ENCODE measurements at regions of chr20 and their contacts with region 1.

Region 1: GRCh38 chr20:10660661-10661060 is 13.1 kb downstream of the JAG1 start:
- DNase-seq: no peak
- H3K4me3 ChIP-seq: no peak overlapping the region
- H3K4me3 Mint-ChIP-seq: peak overlapping the region; percentile 55
- H3K27ac Mint-ChIP-seq: peak overlapping the region; percentile 90
- H3K4me1 ChIP-seq: peaks cover 68% of the 10 kb centered on the region
- H3K4me1 Mint-ChIP-seq: peaks cover 80% of the 10 kb centered on the region
- H3K27me3 ChIP-seq: no peaks in the 10 kb centered on the region
- H3K27me3 Mint-ChIP-seq: no peaks in the 10 kb centered on the region
- CTCF ChIP-seq: no peak

Region 2: GRCh38 chr20:10611357-10611756 is 49.3 kb before region 1 on chr20:
- CTCF ChIA-PET with region 1: no interaction called
- POLR2A ChIA-PET with region 1: no interaction called
- intact Hi-C with region 1: loop called (anchors 1 kb)
- DNase-seq: peak; percentile 64 to 69
- H3K4me3 ChIP-seq: no peak overlapping the region
- H3K4me3 Mint-ChIP-seq: no peak overlapping the region
- H3K27ac Mint-ChIP-seq: no peak overlapping the region
- H3K4me1 ChIP-seq: no peaks in the 10 kb centered on the region
- H3K4me1 Mint-ChIP-seq: no peaks in the 10 kb centered on the region
- H3K27me3 ChIP-seq: no peaks in the 10 kb centered on the region
- H3K27me3 Mint-ChIP-seq: no peaks in the 10 kb centered on the region
- CTCF ChIP-seq: peak; percentile 42 to 67

Region 3: DNA sequence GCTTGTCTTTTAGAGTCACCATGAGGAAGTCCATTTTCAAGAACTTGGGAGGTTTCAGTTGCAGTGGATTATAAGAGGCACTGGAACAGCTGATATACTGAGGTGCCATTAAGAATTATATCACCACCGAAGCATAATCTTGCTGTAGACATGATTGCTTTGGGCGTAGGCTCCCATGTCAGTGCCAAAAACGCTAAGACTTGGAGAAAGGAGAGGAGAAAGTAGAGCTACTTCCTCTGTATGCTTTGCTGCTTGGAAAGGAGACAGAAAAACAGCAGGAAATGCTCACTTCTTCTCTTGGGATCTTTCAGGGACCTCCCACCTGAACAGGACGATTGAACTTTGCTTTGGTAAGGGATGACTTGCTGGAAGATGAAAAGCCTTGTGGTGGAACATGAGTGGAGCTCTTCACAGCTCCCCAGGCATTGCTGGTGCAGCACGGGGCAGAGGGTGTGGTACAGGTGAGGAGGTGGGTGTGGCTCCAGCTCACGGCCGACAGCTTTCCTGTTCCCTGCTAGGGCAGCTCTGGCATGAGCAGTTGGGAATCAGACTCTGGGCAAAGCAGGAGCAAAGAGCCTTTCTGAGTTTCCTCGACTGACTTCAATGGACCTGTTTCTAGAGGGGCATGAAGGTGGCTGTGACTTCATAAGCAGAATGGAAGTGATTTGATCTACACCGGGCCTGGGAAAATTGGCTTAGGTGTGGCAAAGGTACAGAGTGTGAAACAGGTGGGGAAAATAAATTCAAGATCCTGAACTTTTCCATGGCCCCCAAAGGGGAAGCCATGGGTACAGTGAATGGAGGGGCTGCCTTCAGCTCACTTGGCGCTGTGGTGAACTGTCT is 203.6 kb after region 1 on chr20:
- CTCF ChIA-PET with region 1: no interaction called
- POLR2A ChIA-PET with region 1: no interaction called
- intact Hi-C with region 1: no loop called
- DNase-seq: no peak
- H3K4me3 ChIP-seq: no peak overlapping the region
- H3K4me3 Mint-ChIP-seq: no peak overlapping the region
- H3K27ac Mint-ChIP-seq: peak overlapping the region; percentile 13
- H3K4me1 ChIP-seq: peaks cover 27% of the 10 kb centered on the region
- H3K4me1 Mint-ChIP-seq: no peaks in the 10 kb centered on the region
- H3K27me3 ChIP-seq: no peaks in the 10 kb centered on the region
- H3K27me3 Mint-ChIP-seq: no peaks in the 10 kb centered on the region
- CTCF ChIP-seq: no peak

Measured in Caco-2 (cell line).